Prostate gland (tissue), 2 donors: ENCODE measurements at regions of chr2 and their contacts with region 1.

Region 1: DNA sequence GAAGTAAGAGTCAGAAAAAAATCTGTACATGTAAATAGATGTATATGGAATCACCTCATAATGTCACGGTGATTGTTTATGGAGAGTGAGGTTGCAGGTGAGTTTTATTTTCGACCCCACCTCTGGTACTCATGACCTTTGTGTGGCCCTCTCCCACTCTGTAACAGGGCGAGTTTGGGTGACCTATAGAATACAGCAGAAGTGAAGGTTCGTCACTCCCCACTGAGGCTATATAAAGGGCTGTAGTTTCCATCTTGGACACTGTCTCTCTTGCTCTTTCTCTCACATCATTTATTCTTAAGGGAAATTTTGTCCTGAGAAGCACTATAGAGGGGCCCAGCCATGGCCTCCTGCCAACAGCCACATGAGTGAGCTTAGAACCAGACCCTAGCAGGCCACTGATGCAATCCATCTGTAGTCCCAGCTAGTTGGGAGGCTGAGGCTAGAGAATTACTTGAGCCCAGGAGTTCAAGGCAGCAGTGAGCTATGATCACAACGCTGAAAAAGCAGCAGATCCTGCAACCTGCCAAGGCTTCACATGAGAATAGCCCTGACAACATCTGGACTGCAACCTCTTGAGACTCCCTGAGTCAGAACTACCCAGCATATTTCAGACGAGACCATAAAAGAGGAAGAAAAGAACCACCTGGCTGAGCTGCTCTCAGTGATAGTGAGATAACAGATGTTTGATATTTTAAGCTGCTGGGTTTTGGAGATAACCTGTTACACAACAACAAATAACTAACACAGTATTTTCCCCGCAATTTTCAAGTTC is 74.3 kb upstream of the SLC1A4 start:
- DNase-seq: no peak
- H3K4me3 ChIP-seq: no peak overlapping the region
- H3K27ac ChIP-seq: no peak overlapping the region
- H3K4me1 ChIP-seq: no peaks in the 10 kb centered on the region
- H3K27me3 ChIP-seq: no peaks in the 10 kb centered on the region
- CTCF ChIP-seq: no peak
- POLR2A ChIP-seq: no peak

Region 2: DNA sequence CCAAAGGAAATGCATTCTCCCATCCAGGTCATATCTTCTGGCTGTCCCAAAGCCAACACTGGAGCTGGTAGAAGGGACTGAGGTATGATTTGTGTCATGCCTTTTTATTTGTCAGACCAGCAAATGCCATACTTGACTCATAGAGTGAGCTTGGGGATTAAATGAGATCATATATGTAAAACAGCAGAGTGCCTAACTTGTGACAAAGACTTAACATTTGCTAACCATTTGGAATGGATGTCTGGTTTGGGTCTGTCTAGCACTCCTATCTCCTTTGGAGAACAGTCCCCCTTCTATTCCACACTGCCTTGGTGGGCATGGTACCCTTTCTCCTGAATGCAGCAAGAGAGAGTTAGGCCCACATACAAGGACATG is 589.5 kb before region 1 on chr2:
- intact Hi-C with region 1: no loop called
- DNase-seq: no peak
- H3K4me3 ChIP-seq: no peak overlapping the region
- H3K27ac ChIP-seq: no peak overlapping the region
- H3K4me1 ChIP-seq: peaks cover 4% of the 10 kb centered on the region
- H3K27me3 ChIP-seq: no peaks in the 10 kb centered on the region
- CTCF ChIP-seq: no peak
- POLR2A ChIP-seq: no peak

Region 3: GRCh38 chr2:64859312-64860212 is 55.4 kb before region 1 on chr2:
- intact Hi-C with region 1: no loop called
- DNase-seq: peak; percentile 87
- H3K4me3 ChIP-seq: peak overlapping the region; percentile 30 to 40
- H3K27ac ChIP-seq: peak overlapping the region; percentile 75 to 84
- H3K4me1 ChIP-seq: peaks cover 8% of the 10 kb centered on the region
- H3K27me3 ChIP-seq: no peaks in the 10 kb centered on the region
- CTCF ChIP-seq: no peak
- POLR2A ChIP-seq: no peak

Region 4: GRCh38 chr2:65040400-65041261 is 125.7 kb after region 1 on chr2:
- intact Hi-C with region 1: loop called (anchors 2 kb)
- DNase-seq: peak; percentile 89
- H3K4me3 ChIP-seq: no peak overlapping the region
- H3K27ac ChIP-seq: no peak overlapping the region
- H3K4me1 ChIP-seq: no peaks in the 10 kb centered on the region
- H3K27me3 ChIP-seq: no peaks in the 10 kb centered on the region
- CTCF ChIP-seq: peak; percentile 91 to 96 (median 92)
- POLR2A ChIP-seq: no peak

Region 5: DNA sequence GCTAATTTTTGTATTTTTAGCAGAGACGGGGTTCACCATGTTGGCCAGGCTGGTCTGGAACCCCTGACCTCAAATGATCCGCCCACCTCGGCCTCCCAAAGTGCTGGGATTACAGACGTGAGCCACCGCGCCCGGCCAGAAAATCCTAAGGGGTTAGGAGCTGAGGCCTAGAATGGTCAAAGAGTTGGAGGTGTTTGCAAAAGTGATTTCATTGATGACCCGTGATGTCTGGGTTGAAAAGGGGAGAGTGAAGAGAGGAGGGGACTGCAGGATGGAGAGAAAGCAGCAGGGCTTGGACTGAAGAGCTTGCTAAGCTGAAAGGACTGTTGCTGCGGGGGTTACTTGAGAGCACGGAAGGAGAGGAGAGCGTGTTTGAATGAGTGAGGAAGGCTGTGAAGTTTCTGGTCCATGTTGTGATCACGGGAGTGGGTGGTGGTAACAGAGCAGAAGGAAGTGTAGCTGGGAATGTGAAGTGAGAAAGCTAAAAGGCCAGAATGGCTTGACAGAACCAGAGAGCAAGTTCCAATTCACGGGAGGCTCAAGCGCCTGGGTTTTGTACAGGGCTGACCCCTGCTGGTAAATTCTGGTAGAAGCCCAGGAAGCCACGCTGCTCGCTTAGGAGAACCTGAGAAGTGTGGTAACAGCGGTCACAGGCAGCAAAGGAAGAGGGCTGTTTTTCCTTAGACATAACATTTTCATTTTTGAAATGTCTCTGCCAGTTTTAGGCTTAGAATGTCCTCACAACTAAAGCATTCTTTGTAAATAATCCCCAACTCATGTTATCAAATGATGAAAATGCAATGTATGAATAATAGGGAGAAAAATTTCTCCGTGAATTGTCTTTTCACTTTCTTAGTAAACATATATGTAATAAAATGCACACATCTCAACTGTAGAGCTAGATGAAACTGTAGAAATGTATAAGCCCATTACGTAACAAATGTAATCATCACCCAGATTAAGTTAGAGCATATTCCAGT is 272.2 kb after region 1 on chr2:
- intact Hi-C with region 1: loop called (anchors 5 kb)
- DNase-seq: peak; percentile 73
- H3K4me3 ChIP-seq: no peak overlapping the region
- H3K27ac ChIP-seq: no peak overlapping the region
- H3K4me1 ChIP-seq: no peaks in the 10 kb centered on the region
- H3K27me3 ChIP-seq: no peaks in the 10 kb centered on the region
- CTCF ChIP-seq: peak in 3 of 4 experiments; percentile 46 to 73 (median 71)
- POLR2A ChIP-seq: no peak